Kidney (tissue), 22 donors: ENCODE measurements at regions of chr9 and their contacts with region 1.

Region 1: DNA sequence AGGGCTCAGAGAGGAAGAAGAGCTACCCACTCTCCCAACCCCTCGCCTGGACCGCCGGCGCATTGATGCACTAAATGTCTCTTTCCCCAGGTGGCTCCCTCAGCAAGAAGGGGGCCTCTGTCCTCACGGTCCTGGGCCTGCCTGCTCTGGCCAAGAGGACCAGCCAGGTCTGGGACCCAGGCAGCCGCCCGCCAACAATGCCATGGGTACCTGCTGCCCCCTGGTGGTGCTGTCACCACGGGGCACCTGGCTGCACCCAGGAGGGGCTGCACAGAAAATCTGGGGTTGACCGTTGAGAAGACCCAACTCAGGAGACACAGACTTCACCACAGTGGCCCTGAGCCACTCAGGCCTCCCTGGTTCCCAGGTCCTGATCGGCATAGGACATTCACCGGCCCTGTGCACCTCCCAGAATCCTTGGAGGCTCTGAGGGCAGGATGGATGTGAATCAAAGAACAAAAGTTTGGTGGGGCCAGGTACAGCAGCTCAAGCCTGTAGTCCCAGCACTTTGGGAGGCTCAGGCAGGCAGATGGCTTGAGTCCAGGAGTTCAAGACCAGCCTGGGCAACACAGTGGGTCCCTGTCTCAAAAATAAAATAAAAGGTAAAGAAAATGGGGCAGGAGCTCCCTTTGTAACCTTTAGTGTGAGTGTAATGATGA is 2.4 kb upstream of the VAV2 start:
- DNase-seq: peak; percentile 84 to 92 (median 88)
- H3K4me3 ChIP-seq: no peak overlapping the region
- H3K27ac ChIP-seq: no peak overlapping the region
- H3K4me1 ChIP-seq: peaks cover 0 to 27% (median 13%) of the 10 kb centered on the region in 3 donors
- H3K27me3 ChIP-seq: no peaks in the 10 kb centered on the region
- CTCF ChIP-seq: peak; percentile 98

Region 2: DNA sequence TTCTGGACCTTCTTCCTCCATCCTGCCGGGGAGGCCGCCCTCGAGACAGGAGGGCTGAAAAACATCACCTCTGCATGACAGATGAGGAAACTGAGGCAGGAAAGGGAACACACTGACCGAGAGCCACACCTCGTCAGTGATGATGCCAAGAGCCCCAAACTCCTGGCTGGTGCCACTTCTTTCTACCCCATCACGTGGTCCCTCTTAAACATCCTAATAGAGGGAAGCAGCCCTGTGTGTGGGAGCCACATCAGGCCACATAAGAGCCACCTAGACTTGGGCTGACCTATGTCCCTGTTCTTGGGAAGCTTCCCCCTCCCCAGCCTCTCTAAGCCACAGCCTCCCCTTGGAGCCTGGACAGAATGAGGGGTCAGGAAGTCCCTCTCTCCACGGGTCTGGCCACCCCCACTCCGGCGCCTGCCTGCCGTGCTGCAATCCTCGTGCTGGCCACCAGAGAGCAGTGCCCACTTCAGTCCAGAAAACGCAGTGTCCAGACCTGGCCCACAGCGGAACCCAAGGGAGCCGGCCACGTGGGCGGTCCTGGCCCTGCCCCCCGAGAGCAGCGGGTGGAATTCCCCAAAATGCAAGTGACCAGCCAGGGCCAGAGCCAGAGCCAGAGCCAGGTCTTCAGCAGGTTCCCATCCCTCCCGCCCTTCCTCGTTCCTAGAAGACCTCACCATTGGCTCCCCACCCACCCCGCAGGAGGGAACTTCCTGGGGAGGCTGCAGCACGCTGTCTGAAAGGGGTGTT is 201.6 kb before region 1 on chr9:
- intact Hi-C with region 1: loop called (anchors 5 kb)
- DNase-seq: peak; percentile 60 to 93 (median 78)
- H3K4me3 ChIP-seq: no peak overlapping the region
- H3K27ac ChIP-seq: no peak overlapping the region
- H3K4me1 ChIP-seq: peaks cover 0 to 25% (median 0%) of the 10 kb centered on the region in 3 donors
- H3K27me3 ChIP-seq: no peaks in the 10 kb centered on the region
- CTCF ChIP-seq: peak; percentile 97